Naive thymus-derived CD4-positive, alpha-beta T cell (primary cell): ENCODE measurements at regions of chr5 and their contacts with region 1.

Region 1: GRCh38 chr5:154189819-154190594 is 526 bp upstream of the GALNT10 start:
- DNase-seq: peak; percentile 63 to 82 (median 79)
- ATAC-seq: peak; percentile 93
- H3K4me3 ChIP-seq: peak overlapping the region; percentile 94
- H3K4me3 Mint-ChIP-seq: peak overlapping the region; percentile 82 to 93 (median 88)
- H3K27ac ChIP-seq: peak overlapping the region; percentile 80
- H3K27ac Mint-ChIP-seq: peak overlapping the region; percentile 71 to 83 (median 78)
- H3K4me1 ChIP-seq: peaks cover 16 to 22% of the 10 kb centered on the region in 2 donors
- H3K4me1 Mint-ChIP-seq: peaks cover 33 to 49% (median 41%) of the 10 kb centered on the region in 7 donors
- H3K27me3 ChIP-seq: no peaks in the 10 kb centered on the region
- H3K27me3 Mint-ChIP-seq: peaks cover 0 to 12% (median 0%) of the 10 kb centered on the region in 5 donors

Region 2: DNA sequence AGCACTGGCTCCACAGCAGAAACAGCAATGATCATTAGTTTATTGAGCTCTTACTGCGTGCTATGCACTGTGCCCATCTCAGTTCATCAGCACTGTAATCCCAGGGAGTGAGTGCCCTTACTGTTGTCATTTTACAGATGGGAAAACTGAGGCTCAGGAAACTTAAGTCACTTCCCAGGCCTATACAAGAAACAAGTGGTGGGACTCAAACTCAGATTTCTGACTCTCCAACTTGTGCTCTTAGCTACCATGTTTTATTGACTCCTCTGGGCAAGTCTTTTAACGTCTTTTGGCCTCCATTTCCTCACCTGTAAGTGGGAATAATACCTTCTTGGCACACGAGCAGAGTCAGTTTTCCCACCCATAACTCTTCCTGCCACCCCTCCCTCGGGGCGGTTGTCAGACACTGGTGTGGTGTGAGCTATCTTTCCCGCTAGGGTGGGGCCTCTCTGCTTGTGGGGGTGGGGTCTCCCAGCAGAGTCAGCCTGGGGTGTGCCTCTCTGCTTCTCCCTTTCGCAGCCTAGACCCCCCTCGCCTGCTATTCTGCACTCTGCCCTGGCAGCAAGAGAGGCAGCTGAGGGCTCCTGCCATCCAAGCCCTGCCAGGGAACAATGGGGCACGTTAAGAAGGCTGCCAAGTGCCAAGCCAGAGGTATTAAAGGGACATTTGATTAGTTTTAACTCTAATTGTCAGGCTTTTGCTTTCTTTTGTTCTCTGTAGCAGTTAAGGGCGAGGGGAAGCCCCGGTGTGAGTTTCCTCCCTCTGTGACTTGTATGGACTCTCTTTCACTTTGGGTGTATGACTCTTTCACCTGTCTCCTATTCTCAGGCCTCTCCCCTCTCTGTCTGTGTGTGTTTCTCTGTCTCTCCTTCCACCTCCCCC is 12.6 kb after region 1 on chr5:
- CTCF ChIA-PET with region 1: interaction called, 6 read pairs
- POLR2A ChIA-PET with region 1: interaction called, 26 read pairs
- intact Hi-C with region 1: loop called (anchors 1 kb)
- DNase-seq: peak in 3 of 9 donors; percentile 26 to 52 (median 47)
- ATAC-seq: peak; percentile 71
- H3K4me3 ChIP-seq: peak overlapping the region; percentile 31
- H3K4me3 Mint-ChIP-seq: peak overlapping the region; percentile 24 to 87 (median 71)
- H3K27ac ChIP-seq: peak overlapping the region; percentile 66
- H3K27ac Mint-ChIP-seq: peak overlapping the region; percentile 49 to 97 (median 90)
- H3K4me1 ChIP-seq: peaks cover 26 to 32% of the 10 kb centered on the region in 2 donors
- H3K4me1 Mint-ChIP-seq: peaks cover 36 to 74% (median 45%) of the 10 kb centered on the region in 7 donors
- H3K27me3 ChIP-seq: no peaks in the 10 kb centered on the region
- H3K27me3 Mint-ChIP-seq: no peaks in the 10 kb centered on the region

Region 3: DNA sequence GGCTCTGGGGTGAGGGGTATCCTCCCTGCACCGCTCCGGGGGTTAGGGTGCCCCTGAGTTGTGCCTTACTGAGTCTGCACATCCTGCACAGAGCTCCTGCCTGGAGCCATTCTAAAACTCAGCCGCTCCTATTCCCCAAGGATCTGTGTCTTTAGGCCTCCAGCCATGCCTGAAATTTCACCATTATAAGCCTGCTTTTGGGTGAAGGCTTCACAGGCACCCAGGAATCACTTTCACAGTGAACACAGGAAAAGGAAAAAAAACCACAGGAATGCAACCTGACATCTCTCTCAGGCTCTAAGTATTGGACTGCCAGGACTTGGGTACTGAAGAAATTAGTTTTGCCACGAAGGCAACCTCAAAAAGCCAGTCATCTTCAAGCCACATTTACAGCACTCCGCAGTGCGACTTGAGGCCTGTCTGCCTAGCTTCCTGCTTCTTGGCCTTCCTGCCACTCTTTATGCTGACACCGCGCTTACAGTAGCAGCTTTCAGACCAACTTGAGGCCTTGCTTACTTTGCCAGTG is 31.4 kb after region 1 on chr5:
- CTCF ChIA-PET with region 1: interaction called, 4 read pairs
- POLR2A ChIA-PET with region 1: interaction called, 10 read pairs
- intact Hi-C with region 1: loop called (anchors 1 kb)
- DNase-seq: peak in 8 of 9 donors; percentile 29 to 63 (median 46)
- ATAC-seq: peak; percentile 91
- H3K4me3 ChIP-seq: no peak overlapping the region
- H3K4me3 Mint-ChIP-seq: peak overlapping the region in 7 of 10 donors; percentile 2 to 71 (median 53)
- H3K27ac ChIP-seq: peak overlapping the region; percentile 51
- H3K27ac Mint-ChIP-seq: peak overlapping the region; percentile 83 to 98 (median 94)
- H3K4me1 ChIP-seq: peaks cover 6 to 10% of the 10 kb centered on the region in 2 donors
- H3K4me1 Mint-ChIP-seq: peaks cover 24 to 68% (median 36%) of the 10 kb centered on the region in 7 donors
- H3K27me3 ChIP-seq: no peaks in the 10 kb centered on the region
- H3K27me3 Mint-ChIP-seq: no peaks in the 10 kb centered on the region

Region 4: GRCh38 chr5:154445422-154446182 is 255.6 kb after region 1 on chr5 and contains the start of gene SAP30L:
- CTCF ChIA-PET with region 1: no interaction called
- POLR2A ChIA-PET with region 1: interaction called, 4 read pairs
- intact Hi-C with region 1: loop called (anchors 1 to 2 kb)
- DNase-seq: peak; percentile 92 to 99 (median 97)
- ATAC-seq: peak; percentile 97
- H3K4me3 ChIP-seq: peak within 1 kb of the TSS; percentile 90
- H3K4me3 Mint-ChIP-seq: peak within 1 kb of the TSS; percentile 94 to 100 (median 99)
- H3K27ac ChIP-seq: peak within 1 kb of the TSS; percentile 83
- H3K27ac Mint-ChIP-seq: peak within 1 kb of the TSS; percentile 88 to 98 (median 95)
- H3K4me1 ChIP-seq: peaks cover 16 to 35% of the 10 kb centered on the region in 2 donors
- H3K4me1 Mint-ChIP-seq: peaks cover 32 to 74% (median 61%) of the 10 kb centered on the region in 7 donors
- H3K27me3 ChIP-seq: no peaks in the 10 kb centered on the region
- H3K27me3 Mint-ChIP-seq: no peaks in the 10 kb centered on the region
- total RNA-seq, gene SAP30L: 31.1 to 45.7 (median 35.9) TPM